ENCODE measurements at regions of chr16 and their contacts with region 1.

Region 1: GRCh38 chr16:56964243-56965148 is 2.7 kb downstream of the CETP start:
- DNase-seq: peak; percentile 93
- ATAC-seq: peak; percentile 94
- H3K4me3 Mint-ChIP-seq: no peak overlapping the region
- H3K27ac Mint-ChIP-seq: peak overlapping the region; percentile 84
- H3K4me1 Mint-ChIP-seq: peaks cover 25% of the 10 kb centered on the region
- H3K27me3 Mint-ChIP-seq: no peaks in the 10 kb centered on the region
- CTCF ChIP-seq: peak; percentile 97

Region 2: GRCh38 chr16:56950881-56951771 is 13.4 kb before region 1 on chr16:
- CTCF ChIA-PET with region 1: interaction called, 27 read pairs
- POLR2A ChIA-PET with region 1: interaction called, 6 read pairs
- intact Hi-C with region 1: loop called (anchors 1 kb)
- DNase-seq: peak; percentile 68
- ATAC-seq: peak; percentile 90
- H3K4me3 Mint-ChIP-seq: peak overlapping the region; percentile 60
- H3K27ac Mint-ChIP-seq: peak overlapping the region; percentile 74
- H3K4me1 Mint-ChIP-seq: peaks cover 48% of the 10 kb centered on the region
- H3K27me3 Mint-ChIP-seq: no peaks in the 10 kb centered on the region
- CTCF ChIP-seq: no peak

Region 3: DNA sequence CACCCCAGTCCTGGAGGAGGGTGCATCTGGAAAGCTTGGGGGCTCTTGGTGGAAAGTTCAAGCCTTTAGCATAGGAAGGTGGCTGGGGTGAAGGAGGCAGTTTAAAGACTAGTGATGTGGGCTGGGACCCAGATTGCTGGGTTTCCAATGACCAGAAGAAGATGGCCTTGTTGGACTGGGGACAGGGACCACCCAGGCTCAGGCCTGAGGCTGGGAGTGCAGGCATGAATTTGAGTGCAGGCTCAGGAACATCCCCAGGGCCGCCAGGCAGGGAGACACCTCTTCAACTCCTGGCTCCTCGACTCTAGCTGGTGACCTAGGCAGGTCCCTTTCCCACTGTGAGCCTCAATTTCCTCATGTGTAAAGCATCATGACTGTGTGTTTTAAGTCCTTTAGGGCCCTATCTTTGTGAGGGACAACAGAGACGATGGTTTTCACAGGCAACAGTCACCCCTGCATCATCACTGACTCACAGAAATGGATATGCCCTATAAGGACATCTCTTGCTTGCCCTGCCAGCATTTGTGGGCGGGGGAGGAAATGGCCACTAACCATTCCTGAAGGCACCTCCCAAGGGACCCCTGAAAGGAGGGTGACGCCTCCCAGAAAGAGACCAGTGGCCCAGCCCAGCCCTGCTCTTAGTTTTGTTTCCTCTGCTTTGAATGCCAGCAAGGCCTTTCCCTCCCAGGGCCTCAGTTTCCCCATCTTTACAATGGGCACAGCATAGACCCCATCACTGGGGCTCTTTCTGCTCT is 36.0 kb after region 1 on chr16:
- CTCF ChIA-PET with region 1: interaction called, 11 read pairs
- POLR2A ChIA-PET with region 1: interaction called, 33 read pairs
- intact Hi-C with region 1: loop called (anchors 1 kb)
- DNase-seq: peak; percentile 40
- ATAC-seq: peak; percentile 72
- H3K4me3 Mint-ChIP-seq: peak overlapping the region; percentile 55
- H3K27ac Mint-ChIP-seq: peak overlapping the region; percentile 90
- H3K4me1 Mint-ChIP-seq: peaks cover 87% of the 10 kb centered on the region
- H3K27me3 Mint-ChIP-seq: no peaks in the 10 kb centered on the region
- CTCF ChIP-seq: no peak

Region 4: DNA sequence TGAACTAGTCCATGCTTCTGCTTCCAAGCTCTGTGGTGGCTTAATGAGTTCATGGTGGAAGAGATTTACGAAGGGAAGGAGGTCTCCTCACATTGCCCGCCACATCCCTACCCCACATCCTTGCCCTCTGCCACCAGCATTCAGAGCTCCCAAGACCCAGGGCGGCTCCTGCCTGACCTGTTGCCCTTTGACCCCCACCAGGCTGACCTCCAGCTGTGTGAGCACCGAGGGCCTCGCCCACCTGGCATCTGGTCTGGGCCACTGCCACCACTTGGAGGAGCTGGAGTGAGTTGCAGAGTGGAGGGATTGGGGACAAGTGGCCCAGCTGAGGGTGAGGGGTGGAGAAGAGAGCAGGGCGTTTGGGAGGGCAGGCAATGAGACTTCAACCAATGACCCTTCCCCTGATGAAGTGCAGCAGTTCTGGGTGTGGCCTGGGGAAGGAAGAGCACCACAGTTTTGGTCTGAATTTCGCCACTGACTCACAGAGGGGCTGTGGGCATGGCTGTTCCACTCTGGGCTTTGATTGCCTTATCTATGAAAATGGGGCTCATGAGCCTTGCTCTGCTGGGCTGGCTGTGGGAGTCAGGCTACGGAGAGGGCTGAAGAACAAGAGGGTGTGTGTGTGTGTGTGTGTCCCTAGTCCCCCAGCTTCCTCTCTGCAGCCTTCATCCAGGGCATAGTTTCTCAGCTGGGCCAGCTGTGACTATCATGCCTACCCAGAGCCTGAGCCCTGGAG is 105.3 kb after region 1 on chr16:
- CTCF ChIA-PET with region 1: interaction called, 10 read pairs
- POLR2A ChIA-PET with region 1: no interaction called
- intact Hi-C with region 1: no loop called
- DNase-seq: no peak
- ATAC-seq: no peak
- H3K4me3 Mint-ChIP-seq: no peak overlapping the region
- H3K27ac Mint-ChIP-seq: peak overlapping the region; percentile 24
- H3K4me1 Mint-ChIP-seq: peaks cover 14% of the 10 kb centered on the region
- H3K27me3 Mint-ChIP-seq: no peaks in the 10 kb centered on the region
- CTCF ChIP-seq: no peak

Region 5: GRCh38 chr16:57091975-57092785 is 127.7 kb after region 1 on chr16 and contains the start of gene CPNE2:
- CTCF ChIA-PET with region 1: interaction called, 17 read pairs
- POLR2A ChIA-PET with region 1: no interaction called
- intact Hi-C with region 1: no loop called
- DNase-seq: peak; percentile 52
- ATAC-seq: peak; percentile 55
- H3K4me3 Mint-ChIP-seq: peak within 1 kb of the TSS; percentile 81
- H3K27ac Mint-ChIP-seq: no peak within 1 kb of the TSS
- H3K4me1 Mint-ChIP-seq: peaks cover 13% of the 10 kb centered on the region
- H3K27me3 Mint-ChIP-seq: peaks cover 24% of the 10 kb centered on the region
- CTCF ChIP-seq: no peak
- total RNA-seq, gene CPNE2: 7.4 and 8.3 TPM in 2 replicates

Region 6: DNA sequence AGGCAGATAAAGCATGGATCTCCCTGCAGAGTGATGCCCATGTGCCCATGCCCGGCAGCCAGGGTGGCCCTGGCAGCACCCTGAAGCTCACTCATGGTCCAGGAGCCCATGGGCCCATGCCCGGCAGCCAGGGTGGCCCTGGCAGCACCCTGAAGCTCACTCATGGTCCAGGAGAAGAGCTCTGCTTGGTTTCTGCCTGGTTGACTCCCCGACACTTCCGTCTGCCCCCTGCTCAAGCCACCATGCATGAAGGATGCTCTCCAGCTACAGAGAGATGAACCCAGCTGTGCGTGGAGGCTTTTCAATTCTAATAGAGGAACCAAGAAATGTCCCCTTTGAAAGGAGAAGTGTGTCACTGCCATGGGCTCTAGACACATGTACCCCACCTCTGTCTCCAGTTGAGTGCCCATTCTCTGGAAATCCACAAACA is 448.8 kb after region 1 on chr16:
- CTCF ChIA-PET with region 1: no interaction called
- POLR2A ChIA-PET with region 1: no interaction called
- intact Hi-C with region 1: loop called (anchors 10 kb)
- DNase-seq: peak; percentile 52
- ATAC-seq: peak; percentile 89
- H3K4me3 Mint-ChIP-seq: peak overlapping the region; percentile 69
- H3K27ac Mint-ChIP-seq: peak overlapping the region; percentile 81
- H3K4me1 Mint-ChIP-seq: peaks cover 68% of the 10 kb centered on the region
- H3K27me3 Mint-ChIP-seq: no peaks in the 10 kb centered on the region
- CTCF ChIP-seq: no peak

Region 7: DNA sequence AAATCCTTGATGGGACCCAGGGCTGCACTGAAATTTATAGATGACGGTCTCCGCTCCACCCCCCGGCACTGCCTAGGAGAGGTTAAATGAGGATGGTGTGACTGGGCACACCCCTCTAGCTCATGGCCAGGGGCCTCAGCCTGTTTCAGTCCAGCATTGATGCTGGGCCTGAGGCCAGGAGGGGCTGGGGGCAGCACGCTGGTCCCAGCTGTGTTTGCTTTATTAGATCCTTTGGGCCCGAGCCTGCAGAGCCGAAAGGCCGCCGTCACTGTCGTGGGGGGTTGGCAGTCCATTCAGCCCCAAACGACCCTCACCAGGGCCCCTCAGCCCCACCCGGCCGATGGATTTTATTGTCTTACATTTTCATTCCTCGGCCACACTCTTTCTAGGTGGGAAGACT is 532.6 kb after region 1 on chr16:
- CTCF ChIA-PET with region 1: no interaction called
- POLR2A ChIA-PET with region 1: no interaction called
- intact Hi-C with region 1: no loop called
- DNase-seq: no peak
- ATAC-seq: no peak
- H3K4me3 Mint-ChIP-seq: no peak overlapping the region
- H3K27ac Mint-ChIP-seq: no peak overlapping the region
- H3K4me1 Mint-ChIP-seq: peaks cover 11% of the 10 kb centered on the region
- H3K27me3 Mint-ChIP-seq: peaks cover 4% of the 10 kb centered on the region
- CTCF ChIP-seq: no peak

Measured in activated B cell treated with CpG ODN at 0.5 μM for 24 hours (primary cell).